Activated naive CD4-positive, alpha-beta T cell treated with anti-CD3 and anti-CD28 coated beads, Interleukin-2, amount 10 ng/mL, durations not matched to agents 7 days and 5 days (primary cell): ENCODE measurements at regions of chr5 and their contacts with region 1.

Region 1: DNA sequence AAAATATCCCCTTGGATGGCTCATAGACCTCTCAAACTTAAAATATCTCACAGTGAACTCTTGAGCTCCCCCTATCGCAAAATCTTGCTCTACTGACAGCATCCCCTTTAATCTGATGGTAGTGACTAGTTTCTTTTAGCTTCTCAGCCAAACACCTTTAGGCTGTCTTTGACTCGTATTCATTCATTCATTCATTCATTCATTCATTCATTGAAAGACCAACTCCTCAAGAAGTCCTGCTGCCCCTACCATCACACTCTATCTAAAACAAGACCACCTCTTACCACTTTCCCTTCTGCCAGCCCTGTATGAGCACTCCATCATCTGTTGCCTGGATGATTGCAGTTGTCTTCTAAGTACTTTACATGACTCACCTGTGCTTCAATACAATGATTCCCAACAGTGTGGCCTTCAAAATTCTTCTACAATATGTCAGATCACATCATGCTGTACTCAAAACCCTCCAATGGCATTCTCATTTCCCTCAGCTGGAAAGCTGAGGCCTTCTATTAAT is 46.8 kb downstream of the ITGA2 start:
- DNase-seq: no peak
- H3K4me3 Mint-ChIP-seq: no peak overlapping the region
- H3K27ac Mint-ChIP-seq: no peak overlapping the region
- H3K4me1 Mint-ChIP-seq: peaks cover 76% of the 10 kb centered on the region
- H3K27me3 Mint-ChIP-seq: no peaks in the 10 kb centered on the region

Region 2: DNA sequence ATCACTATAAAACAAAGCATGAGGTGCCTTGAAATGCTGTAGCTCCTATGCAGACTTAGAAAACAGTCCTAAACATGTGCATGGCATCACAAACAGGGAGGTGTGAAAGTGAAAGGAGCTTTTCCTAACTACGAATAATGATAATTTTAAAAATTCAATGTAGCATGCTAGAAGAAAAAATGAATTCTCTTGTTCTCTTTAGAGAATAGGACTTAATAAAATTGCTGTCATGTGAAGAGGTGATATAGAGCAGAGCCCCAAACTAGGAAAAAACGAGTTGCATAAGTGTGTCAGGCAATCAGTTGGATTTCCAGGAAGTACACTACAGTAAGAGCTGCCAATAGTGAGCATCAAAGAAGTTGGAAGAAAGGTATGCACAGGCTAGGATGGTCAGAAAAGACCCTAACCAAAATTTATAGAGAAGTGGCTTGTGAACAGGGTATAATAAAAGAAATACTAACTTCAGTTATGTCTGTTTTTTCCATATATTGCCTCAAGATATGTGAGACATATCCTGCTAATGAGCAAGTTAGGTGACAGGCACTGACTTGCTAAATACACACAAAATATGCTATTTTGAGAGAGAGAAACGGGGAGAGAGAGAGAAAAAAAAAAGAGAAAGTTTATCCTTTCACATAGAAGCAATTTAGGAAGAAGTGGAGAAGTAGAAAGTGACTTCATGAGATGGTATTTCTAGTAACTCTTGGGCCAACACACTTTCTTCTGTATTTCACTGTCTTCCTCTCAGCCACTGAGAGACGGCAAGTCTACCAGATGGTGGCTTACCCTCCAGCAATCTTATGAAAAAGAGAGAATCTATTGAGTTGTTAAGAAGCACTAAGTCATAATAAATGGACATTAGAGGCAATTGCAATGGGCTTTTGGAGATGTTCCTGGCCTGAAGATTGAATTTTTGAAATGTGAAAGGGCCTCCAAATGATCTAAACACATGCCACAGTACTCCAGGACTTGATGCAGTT is 28.7 kb before region 1 on chr5:
- CTCF ChIA-PET with region 1: interaction called, 10 read pairs
- DNase-seq: no peak
- H3K4me3 Mint-ChIP-seq: no peak overlapping the region
- H3K27ac Mint-ChIP-seq: peak overlapping the region; percentile 64
- H3K4me1 Mint-ChIP-seq: peaks cover 81% of the 10 kb centered on the region
- H3K27me3 Mint-ChIP-seq: no peaks in the 10 kb centered on the region

Region 3: GRCh38 chr5:53023969-53024368 is 12.0 kb before region 1 on chr5:
- CTCF ChIA-PET with region 1: interaction called, 23 read pairs
- DNase-seq: no peak
- H3K4me3 Mint-ChIP-seq: no peak overlapping the region
- H3K27ac Mint-ChIP-seq: no peak overlapping the region
- H3K4me1 Mint-ChIP-seq: peaks cover 3% of the 10 kb centered on the region
- H3K27me3 Mint-ChIP-seq: peaks cover 4% of the 10 kb centered on the region

Region 4: DNA sequence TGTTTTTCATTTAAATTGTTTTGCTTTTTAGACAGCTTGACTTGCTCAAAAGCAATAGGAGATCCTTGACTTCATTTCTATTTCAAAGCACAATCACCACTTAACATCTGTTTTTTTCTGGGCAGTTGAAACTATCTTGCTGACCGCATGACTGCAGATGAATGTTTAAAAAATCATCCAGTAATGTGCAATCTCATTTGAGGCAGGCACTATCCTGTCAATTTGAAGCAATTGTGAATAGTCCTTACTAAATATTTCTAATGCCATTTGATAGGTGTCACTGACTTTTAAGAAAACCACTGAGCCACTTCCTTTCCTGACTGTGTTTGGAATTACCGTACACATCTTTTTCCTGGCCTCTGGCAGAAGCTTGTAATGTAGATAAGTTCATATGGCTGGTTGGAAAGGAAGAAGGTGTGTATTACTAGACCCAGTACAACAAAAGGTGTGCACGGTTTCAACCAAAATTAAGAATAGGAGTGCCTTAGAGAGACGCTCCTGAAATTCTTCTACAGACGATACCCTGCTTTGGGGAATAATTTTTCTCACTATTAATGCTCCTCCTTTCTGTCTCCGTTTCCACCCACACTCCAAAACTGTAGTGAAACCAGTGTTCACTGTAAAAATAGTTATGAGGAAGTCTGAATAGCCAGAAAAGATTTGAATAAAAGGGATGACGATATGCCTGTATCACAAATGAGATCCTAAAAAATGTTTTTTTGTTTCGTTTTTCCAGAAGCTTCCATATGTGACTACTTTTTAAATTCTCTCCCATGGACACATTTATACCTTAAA is 210.3 kb after region 1 on chr5:
- CTCF ChIA-PET with region 1: no interaction called
- DNase-seq: no peak
- H3K4me3 Mint-ChIP-seq: no peak overlapping the region
- H3K27ac Mint-ChIP-seq: no peak overlapping the region
- H3K4me1 Mint-ChIP-seq: no peaks in the 10 kb centered on the region
- H3K27me3 Mint-ChIP-seq: peaks cover 6% of the 10 kb centered on the region